ENCODE measurements at regions of chr13 and their contacts with region 1.

Region 1: DNA sequence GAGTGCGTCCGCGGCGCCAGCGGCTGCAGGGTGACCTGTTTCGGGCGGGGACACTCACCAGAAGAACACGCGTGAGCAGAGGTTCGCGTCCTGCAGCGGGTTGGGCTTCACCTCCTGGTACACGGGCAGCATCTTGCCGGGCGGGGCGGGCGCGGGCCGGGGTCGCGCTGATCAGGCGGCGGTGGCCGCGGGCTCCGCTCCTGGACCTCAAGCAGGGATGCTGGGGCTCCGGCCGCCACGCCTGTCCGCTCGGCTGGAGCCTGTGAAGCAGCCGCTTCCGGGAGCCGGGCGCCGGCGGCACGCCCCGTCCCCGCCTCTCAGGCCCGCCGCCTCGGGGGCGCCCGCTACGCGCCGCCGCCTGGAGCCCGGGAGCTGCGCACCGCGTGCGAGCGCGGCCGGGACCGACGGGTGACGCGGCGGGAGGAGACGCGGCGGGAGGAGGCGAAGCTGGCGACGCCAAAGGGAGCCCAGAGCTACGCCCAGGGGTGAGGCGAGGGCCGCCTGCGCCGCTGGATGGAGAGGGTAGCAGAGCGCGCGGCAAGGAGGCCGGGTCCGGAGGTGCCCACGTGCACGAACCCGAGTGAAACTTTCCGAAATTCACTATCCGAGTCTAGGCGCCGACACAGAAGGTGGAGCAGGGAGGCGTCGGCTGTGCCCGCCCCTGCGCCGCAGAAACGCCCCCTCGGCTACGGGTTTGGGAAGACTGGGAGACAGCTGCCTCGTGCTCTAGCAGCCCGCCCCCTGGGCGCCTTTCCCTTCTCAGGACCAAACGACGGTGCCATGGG is at the start of gene ABCC4:
- DNase-seq: peak; percentile 90
- H3K4me3 Mint-ChIP-seq: peak within 1 kb of the TSS; percentile 91
- H3K27ac Mint-ChIP-seq: peak within 1 kb of the TSS; percentile 85
- H3K4me1 Mint-ChIP-seq: peaks cover 28% of the 10 kb centered on the region
- H3K27me3 Mint-ChIP-seq: peaks cover 12% of the 10 kb centered on the region
- total RNA-seq, gene ABCC4: 19.6 and 20.9 TPM in 2 replicates

Region 2: GRCh38 chr13:94595950-94596574 is 705.3 kb before region 1 on chr13 and contains the start of gene TGDS:
- intact Hi-C with region 1: loop called (anchors 5 kb)
- DNase-seq: peak; percentile 97
- H3K4me3 Mint-ChIP-seq: peak within 1 kb of the TSS; percentile 93
- H3K27ac Mint-ChIP-seq: peak within 1 kb of the TSS; percentile 97
- H3K4me1 Mint-ChIP-seq: peaks cover 34% of the 10 kb centered on the region
- H3K27me3 Mint-ChIP-seq: no peaks in the 10 kb centered on the region
- total RNA-seq, gene TGDS: 27.5 and 31.0 TPM in 2 replicates

Region 3: DNA sequence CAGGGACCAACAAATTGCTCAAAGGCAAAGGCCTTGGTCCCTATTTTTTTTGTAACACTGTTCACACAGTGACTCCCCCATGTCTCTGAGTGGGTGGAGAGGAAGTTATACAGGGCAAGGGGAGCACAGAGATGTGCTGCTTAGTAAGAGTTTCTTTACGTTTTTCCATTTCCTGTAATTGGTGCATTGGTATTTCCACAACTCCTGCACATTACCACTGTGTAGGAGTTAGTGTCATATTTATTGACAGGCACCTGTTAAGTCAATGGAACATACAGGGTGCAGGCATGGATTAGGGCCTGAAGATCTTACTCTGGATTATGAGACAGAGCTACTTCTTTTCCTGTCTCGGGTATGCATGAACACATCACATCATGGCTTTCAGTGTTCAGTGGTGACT is 634.2 kb before region 1 on chr13:
- intact Hi-C with region 1: loop called (anchors 5 kb)
- DNase-seq: peak; percentile 59
- H3K4me3 Mint-ChIP-seq: peak overlapping the region; percentile 39
- H3K27ac Mint-ChIP-seq: peak overlapping the region; percentile 92
- H3K4me1 Mint-ChIP-seq: peaks cover 32% of the 10 kb centered on the region
- H3K27me3 Mint-ChIP-seq: peaks cover 13% of the 10 kb centered on the region

Region 4: DNA sequence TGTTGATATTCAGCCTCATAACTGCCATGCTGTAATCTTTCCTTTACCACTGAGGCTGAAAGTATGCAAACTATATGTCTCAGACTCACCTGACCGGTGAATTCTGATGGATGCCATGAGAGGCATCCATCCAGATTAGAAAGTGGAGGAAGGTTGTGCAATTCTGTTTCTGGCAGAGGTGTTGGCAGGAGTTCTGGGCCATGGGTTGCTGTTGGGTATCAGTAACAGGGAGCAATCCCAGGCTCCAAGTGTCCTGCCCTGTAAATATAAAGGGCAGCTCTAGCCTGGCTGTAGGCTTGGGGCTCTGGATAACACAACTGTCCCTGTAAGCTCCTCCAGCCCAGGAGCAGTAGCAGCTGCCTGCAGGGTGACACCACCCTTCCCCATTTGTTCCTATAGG is 77.2 kb after region 1 on chr13:
- intact Hi-C with region 1: loop called (anchors 2 kb)
- DNase-seq: no peak
- H3K4me3 Mint-ChIP-seq: no peak overlapping the region
- H3K27ac Mint-ChIP-seq: no peak overlapping the region
- H3K4me1 Mint-ChIP-seq: no peaks in the 10 kb centered on the region
- H3K27me3 Mint-ChIP-seq: peaks cover 10% of the 10 kb centered on the region

Measured in activated CD4-positive, alpha-beta T cell treated with anti-CD3 and anti-CD28 coated beads, Interleukin-2, amount 10 ng/mL, durations not matched to agents 24 days and 14 days (primary cell).